ENCODE measurements at regions of chr11 and their contacts with region 1.

Region 1: GRCh38 chr11:114762408-114762807 is 84.1 kb downstream of the NXPE2 start:
- DNase-seq: no peak
- H3K4me3 ChIP-seq: no peak overlapping the region
- H3K27ac ChIP-seq: no peak overlapping the region
- H3K4me1 ChIP-seq: no peaks in the 10 kb centered on the region
- H3K27me3 ChIP-seq: no peaks in the 10 kb centered on the region
- CTCF ChIP-seq: peak in 2 of 3 experiments; percentile 64 to 75
- POLR2A ChIP-seq: no peak

Region 2: DNA sequence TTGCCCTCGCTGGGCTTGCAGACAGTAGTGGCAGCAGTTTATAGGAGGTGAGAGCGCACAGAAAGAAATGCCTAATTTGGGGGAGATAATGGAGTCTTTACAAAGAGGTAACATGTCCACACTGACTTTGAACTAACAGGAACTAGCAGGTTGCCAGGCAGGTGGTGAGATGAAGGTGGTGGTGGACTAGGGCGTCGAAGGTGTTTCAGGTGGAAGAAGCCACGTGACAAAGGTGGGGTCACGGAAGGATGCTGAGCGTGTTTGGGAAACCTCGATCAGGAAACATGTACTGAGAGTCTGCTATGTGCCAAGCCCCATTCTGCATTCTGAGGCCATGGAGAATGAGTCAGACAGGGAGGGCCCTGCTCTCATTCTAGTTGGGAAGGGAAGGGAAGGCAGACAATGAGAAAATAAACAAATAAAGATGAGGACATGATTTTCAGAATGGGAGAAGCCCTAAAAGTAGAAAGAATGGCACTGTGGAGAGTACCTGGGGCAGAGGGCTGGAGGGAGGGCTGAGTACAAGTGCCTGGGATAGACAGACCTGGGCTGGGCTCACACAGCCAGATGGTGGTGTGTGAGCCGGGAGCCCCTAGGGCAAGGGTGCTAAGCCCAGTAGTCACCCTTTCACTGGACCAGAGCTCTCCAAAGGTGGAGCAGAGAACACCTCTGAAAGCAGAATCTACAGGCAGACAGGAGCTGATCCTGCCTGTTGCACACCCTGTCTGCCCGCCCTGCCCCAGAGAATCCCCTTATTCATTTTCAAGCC is 482.4 kb before region 1 on chr11:
- intact Hi-C with region 1: loop called (anchors 10 kb)
- DNase-seq: peak; percentile 58 to 88
- H3K4me3 ChIP-seq: no peak overlapping the region
- H3K27ac ChIP-seq: peak overlapping the region; percentile 76
- H3K4me1 ChIP-seq: peaks cover 27% of the 10 kb centered on the region
- H3K27me3 ChIP-seq: no peaks in the 10 kb centered on the region
- CTCF ChIP-seq: no peak
- POLR2A ChIP-seq: no peak

Region 3: GRCh38 chr11:114340311-114341131 is 421.9 kb before region 1 on chr11:
- intact Hi-C with region 1: loop called (anchors 5 kb)
- DNase-seq: no peak
- H3K4me3 ChIP-seq: peak overlapping the region in 1 of 2 donors; percentile 0
- H3K27ac ChIP-seq: peak overlapping the region; percentile 14
- H3K4me1 ChIP-seq: peaks cover 6% of the 10 kb centered on the region
- H3K27me3 ChIP-seq: no peaks in the 10 kb centered on the region
- CTCF ChIP-seq: peak; percentile 67 to 87 (median 74)
- POLR2A ChIP-seq: no peak

Region 4: DNA sequence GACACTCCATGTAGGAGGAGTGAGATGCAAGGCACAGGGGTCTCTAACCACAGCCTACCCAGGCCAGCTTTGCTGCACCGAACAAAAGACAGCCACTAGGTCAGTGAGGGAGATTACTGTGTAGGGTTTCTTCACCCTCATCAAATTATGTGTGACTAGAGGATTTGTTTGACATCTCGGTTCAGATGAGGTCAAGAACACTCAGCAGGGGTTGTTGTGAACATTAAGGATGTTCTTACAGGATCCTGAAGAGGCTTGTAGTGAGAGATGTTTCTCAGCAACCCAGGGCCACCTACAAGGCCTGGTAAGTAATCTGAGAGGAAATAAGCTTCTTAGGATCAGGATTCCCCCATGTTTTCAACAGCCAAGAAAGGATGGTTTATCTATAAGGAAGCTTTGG is 118.0 kb after region 1 on chr11:
- intact Hi-C with region 1: no loop called
- DNase-seq: no peak
- H3K4me3 ChIP-seq: no peak overlapping the region
- H3K27ac ChIP-seq: no peak overlapping the region
- H3K4me1 ChIP-seq: no peaks in the 10 kb centered on the region
- H3K27me3 ChIP-seq: no peaks in the 10 kb centered on the region
- CTCF ChIP-seq: no peak
- POLR2A ChIP-seq: no peak